HepG2 (cell line): ENCODE measurements at regions of chr2 and their contacts with region 1.

Region 1: GRCh38 chr2:9897331-9897737 is 54.1 kb downstream of the TAF1B start:
- DNase-seq: no peak
- ATAC-seq: no peak
- H3K4me3 ChIP-seq: no peak overlapping the region
- H3K27ac ChIP-seq: no peak overlapping the region
- H3K4me1 ChIP-seq: peaks cover 28% of the 10 kb centered on the region
- H3K27me3 ChIP-seq: no peaks in the 10 kb centered on the region
- CTCF ChIP-seq: no peak
- EP300 ChIP-seq: no peak
- POLR2A ChIP-seq: no peak
- RAD21 ChIP-seq: no peak

Region 2: DNA sequence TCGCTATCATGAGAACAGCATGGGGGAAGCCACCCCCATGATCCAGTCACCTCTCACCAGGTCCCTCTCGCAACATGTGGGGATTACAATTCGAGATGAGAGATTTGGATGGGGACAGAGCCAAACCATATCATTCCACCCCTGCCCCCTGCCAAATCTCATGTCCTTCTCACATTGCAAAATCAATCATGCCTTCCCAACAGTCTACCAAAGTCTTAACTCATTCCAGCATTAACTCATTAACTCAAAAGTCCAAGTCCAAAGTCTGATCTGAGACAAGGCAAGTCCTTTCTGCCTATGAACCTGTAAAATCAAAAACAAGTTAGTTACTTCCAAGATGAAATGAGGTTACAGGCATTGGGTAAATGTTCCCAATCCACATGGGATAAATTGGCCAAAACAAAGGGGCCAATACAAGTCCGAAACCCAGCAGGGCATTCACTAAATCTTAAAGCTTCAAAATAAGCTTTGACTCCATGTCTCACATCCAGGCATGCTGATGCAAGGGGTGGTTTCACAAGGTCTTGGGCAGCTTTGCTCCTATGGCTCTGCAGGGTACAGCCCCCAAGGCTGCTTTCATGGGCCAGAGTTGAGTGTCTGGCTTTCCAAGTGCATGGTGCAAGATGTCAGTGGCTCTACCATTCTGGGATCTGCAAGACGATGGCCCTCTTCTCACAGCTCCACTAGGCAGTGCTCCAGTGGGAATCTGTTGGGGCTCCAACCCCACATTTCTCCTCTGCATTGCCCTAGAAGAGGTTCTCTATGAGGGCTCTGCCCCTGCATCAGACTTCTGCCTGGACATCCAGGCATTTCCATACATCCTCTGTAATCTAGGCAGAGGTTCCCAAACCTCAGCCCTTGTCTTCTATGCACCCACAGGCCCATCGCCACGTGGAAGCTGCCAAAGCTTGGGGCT is 39.3 kb before region 1 on chr2:
- CTCF ChIA-PET with region 1: no interaction called
- POLR2A ChIA-PET with region 1: no interaction called
- in situ Hi-C with region 1: no loop called
- intact Hi-C with region 1: no loop called
- DNase-seq: peak; percentile 15
- ATAC-seq: no peak
- H3K4me3 ChIP-seq: no peak overlapping the region
- H3K27ac ChIP-seq: no peak overlapping the region
- H3K4me1 ChIP-seq: peaks cover 6% of the 10 kb centered on the region; the same call in 1 of the 2 replicates
- H3K27me3 ChIP-seq: no peaks in the 10 kb centered on the region
- CTCF ChIP-seq: no peak
- EP300 ChIP-seq: no peak
- POLR2A ChIP-seq: no peak
- RAD21 ChIP-seq: no peak

Region 3: GRCh38 chr2:9941196-9941995 is 44.1 kb after region 1 on chr2:
- CTCF ChIA-PET with region 1: no interaction called
- POLR2A ChIA-PET with region 1: no interaction called
- in situ Hi-C with region 1: no loop called
- intact Hi-C with region 1: loop called (anchors 5 kb)
- DNase-seq: peak; percentile 84
- ATAC-seq: peak; percentile 68
- H3K4me3 ChIP-seq: peak overlapping the region; percentile 25 to 63 (median 37)
- H3K27ac ChIP-seq: no peak overlapping the region
- H3K4me1 ChIP-seq: peaks cover 66% of the 10 kb centered on the region
- H3K27me3 ChIP-seq: no peaks in the 10 kb centered on the region; a peak in 2 of 5 replicates
- CTCF ChIP-seq: no peak
- EP300 ChIP-seq: no peak
- POLR2A ChIP-seq: no peak
- RAD21 ChIP-seq: no peak

Region 4: GRCh38 chr2:10161206-10161931 is 264.0 kb after region 1 on chr2:
- CTCF ChIA-PET with region 1: no interaction called
- POLR2A ChIA-PET with region 1: no interaction called
- in situ Hi-C with region 1: no loop called
- intact Hi-C with region 1: no loop called
- DNase-seq: no peak
- ATAC-seq: no peak
- H3K4me3 ChIP-seq: no peak overlapping the region
- H3K27ac ChIP-seq: no peak overlapping the region
- H3K4me1 ChIP-seq: no peaks in the 10 kb centered on the region
- H3K27me3 ChIP-seq: no peaks in the 10 kb centered on the region
- CTCF ChIP-seq: no peak
- EP300 ChIP-seq: no peak
- POLR2A ChIP-seq: no peak
- RAD21 ChIP-seq: no peak

Region 5: GRCh38 chr2:11097038-11097720 is 1199.8 kb after region 1 on chr2:
- CTCF ChIA-PET with region 1: no interaction called
- POLR2A ChIA-PET with region 1: no interaction called
- in situ Hi-C with region 1: no loop called
- intact Hi-C with region 1: no loop called
- DNase-seq: no peak
- ATAC-seq: no peak
- H3K4me3 ChIP-seq: no peak overlapping the region
- H3K27ac ChIP-seq: no peak overlapping the region
- H3K4me1 ChIP-seq: no peaks in the 10 kb centered on the region
- H3K27me3 ChIP-seq: peaks cover 4 to 37% of the 10 kb centered on the region in 2 experiments; a peak in 4 of 5 replicates
- CTCF ChIP-seq: no peak
- EP300 ChIP-seq: no peak
- POLR2A ChIP-seq: no peak
- RAD21 ChIP-seq: no peak